Activated CD8-positive, alpha-beta memory T cell treated with anti-CD3 and anti-CD28 coated beads, Interleukin-2, amount 10 ng/mL, durations not matched to agents 7 days and 5 days (primary cell): ENCODE measurements at regions of chr1 and their contacts with region 1.

Region 1: DNA sequence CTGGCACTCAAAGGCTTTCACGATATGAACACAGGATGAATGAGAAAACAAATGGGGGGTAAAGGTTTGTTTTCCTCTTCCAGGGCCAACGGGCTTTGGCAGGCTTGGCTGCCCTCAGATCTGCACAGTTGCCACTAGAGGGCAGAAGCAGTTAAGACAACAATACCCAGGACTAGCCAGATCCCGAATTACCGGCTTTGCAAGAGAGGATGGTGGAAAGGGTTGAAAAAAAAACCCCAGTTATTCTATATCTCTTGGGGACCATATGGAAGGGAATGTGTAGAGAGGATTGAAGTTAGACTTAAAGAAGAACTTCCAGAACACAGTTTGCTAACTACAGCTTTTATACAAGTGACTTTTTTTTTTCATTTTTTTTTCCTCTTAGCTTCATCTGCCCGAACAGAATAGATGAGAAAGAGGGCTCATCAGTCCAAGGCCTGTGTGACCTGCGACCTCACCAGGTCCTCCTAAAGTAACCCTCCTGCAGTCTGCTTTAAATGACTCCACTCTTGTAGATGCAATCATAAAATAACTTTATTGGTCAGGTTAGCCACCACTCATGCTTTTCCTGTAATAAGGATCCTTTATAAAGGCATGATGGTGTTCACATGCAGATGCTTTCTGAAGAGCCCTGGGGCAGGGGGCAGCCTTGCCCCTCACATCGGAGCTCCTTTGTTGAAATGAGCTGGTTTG is 10.7 kb downstream of the FMOD start:
- DNase-seq: peak; percentile 75
- ATAC-seq: peak; percentile 84
- H3K4me3 Mint-ChIP-seq: no peak overlapping the region
- H3K27ac Mint-ChIP-seq: no peak overlapping the region
- H3K4me1 Mint-ChIP-seq: peaks cover 15% of the 10 kb centered on the region
- H3K27me3 Mint-ChIP-seq: peaks cover 47% of the 10 kb centered on the region

Region 2: DNA sequence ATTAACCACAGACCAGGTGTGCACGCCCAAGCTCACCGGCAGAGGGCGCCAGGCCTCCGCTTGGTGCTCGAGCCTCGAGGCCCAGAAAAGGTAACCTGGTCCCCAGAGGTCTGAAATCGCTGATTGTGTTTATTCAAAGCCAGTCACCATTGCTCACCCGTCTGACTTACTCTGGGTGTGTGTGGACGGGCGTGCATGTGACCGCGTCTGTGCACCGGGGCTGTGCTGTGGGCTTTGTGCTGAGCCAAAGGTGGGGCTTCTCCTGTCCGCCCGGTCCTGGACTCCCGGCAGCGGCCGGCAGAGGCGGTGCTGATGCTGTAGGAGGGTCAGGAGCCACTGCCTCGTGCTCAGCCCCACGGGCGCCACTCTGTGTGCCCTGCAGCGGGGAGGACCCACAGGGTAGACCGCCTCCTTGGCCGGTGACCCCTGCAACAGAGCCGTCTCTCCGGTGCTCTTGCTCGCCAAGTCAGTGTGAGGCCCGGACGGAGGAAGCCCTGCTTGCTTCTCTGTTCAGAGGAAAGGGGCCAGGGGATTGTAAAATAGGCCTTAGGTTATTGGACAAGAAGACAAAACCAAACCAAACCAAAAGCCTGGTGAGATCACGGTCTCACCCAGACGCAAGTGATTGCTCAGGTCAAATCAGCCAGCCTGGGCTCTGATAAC is 66.9 kb before region 1 on chr1:
- CTCF ChIA-PET with region 1: interaction called, 806 read pairs
- DNase-seq: peak; percentile 93
- ATAC-seq: peak; percentile 83
- H3K4me3 Mint-ChIP-seq: peak overlapping the region; percentile 53
- H3K27ac Mint-ChIP-seq: peak overlapping the region; percentile 77
- H3K4me1 Mint-ChIP-seq: peaks cover 64% of the 10 kb centered on the region
- H3K27me3 Mint-ChIP-seq: no peaks in the 10 kb centered on the region

Region 3: GRCh38 chr1:203304919-203305808 is 35.1 kb before region 1 on chr1 and contains the start of gene BTG2:
- CTCF ChIA-PET with region 1: interaction called, 124 read pairs
- DNase-seq: peak; percentile 93
- ATAC-seq: peak; percentile 81
- H3K4me3 Mint-ChIP-seq: peak within 1 kb of the TSS; percentile 95
- H3K27ac Mint-ChIP-seq: peak within 1 kb of the TSS; percentile 96
- H3K4me1 Mint-ChIP-seq: peaks cover 58% of the 10 kb centered on the region
- H3K27me3 Mint-ChIP-seq: no peaks in the 10 kb centered on the region
- total RNA-seq, gene BTG2: 72.2 to 142 TPM

Region 4: GRCh38 chr1:203351037-203352013 is 11.1 kb after region 1 on chr1 and contains the start of gene FMOD:
- CTCF ChIA-PET with region 1: interaction called, 11 read pairs
- DNase-seq: no peak
- ATAC-seq: no peak
- H3K4me3 Mint-ChIP-seq: no peak within 1 kb of the TSS
- H3K27ac Mint-ChIP-seq: no peak within 1 kb of the TSS
- H3K4me1 Mint-ChIP-seq: peaks cover 2% of the 10 kb centered on the region
- H3K27me3 Mint-ChIP-seq: peaks cover 44% of the 10 kb centered on the region
- total RNA-seq, gene FMOD: 0.19 TPM in 1 of 2 experiments, not detected in the other

Region 5: GRCh38 chr1:203486618-203487370 is 146.5 kb after region 1 on chr1:
- CTCF ChIA-PET with region 1: interaction called, 195 read pairs
- DNase-seq: no peak
- ATAC-seq: no peak
- H3K4me3 Mint-ChIP-seq: no peak overlapping the region
- H3K27ac Mint-ChIP-seq: no peak overlapping the region
- H3K4me1 Mint-ChIP-seq: peaks cover 4% of the 10 kb centered on the region
- H3K27me3 Mint-ChIP-seq: peaks cover under 1% of the 10 kb centered on the region